ENCODE measurements at regions of chr19 and their contacts with region 1.

Region 1: DNA sequence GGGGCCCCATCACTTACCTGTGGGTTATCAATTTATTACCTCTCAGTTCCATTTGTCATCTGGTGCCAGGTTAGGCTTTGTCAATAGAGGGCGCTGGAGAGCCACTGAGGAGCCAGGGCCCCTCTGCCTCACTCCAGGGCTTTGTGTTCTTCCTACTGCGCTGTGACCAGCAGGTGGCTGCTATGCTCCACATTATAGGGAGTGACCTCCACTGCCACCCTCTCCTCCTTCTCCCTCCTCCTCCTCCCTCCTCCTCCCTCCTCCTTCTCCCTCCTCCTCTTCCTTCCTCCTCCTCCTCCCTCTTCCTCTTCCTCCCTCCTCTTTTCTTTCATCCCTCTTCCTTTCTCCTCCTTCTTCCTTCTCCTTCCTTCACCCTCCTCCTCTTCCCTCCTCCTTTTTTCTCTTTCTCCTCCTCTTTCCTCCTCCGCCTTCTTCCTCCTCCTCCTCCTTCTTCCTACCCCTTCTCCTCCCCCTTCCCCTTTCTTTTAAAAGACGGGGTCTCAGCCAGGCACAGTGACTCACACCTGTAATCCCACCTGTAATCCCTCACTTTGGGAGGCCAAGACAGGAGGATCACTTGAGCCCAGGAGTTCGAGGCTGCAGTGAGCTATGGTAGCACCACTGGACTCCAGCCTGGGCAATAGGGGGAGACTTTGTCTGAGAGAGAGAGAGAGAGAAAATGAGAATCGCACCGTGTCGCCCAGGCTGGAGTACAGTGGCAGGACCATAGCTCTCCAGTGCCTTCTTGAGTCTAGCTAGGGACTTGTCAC is 10.3 kb upstream of the ZBTB32 start:
- DNase-seq: peak; percentile 95
- ATAC-seq: peak; percentile 100
- H3K4me3 Mint-ChIP-seq: no peak overlapping the region
- H3K27ac Mint-ChIP-seq: peak overlapping the region; percentile 70
- H3K4me1 Mint-ChIP-seq: peaks cover 22% of the 10 kb centered on the region
- H3K27me3 Mint-ChIP-seq: no peaks in the 10 kb centered on the region

Region 2: DNA sequence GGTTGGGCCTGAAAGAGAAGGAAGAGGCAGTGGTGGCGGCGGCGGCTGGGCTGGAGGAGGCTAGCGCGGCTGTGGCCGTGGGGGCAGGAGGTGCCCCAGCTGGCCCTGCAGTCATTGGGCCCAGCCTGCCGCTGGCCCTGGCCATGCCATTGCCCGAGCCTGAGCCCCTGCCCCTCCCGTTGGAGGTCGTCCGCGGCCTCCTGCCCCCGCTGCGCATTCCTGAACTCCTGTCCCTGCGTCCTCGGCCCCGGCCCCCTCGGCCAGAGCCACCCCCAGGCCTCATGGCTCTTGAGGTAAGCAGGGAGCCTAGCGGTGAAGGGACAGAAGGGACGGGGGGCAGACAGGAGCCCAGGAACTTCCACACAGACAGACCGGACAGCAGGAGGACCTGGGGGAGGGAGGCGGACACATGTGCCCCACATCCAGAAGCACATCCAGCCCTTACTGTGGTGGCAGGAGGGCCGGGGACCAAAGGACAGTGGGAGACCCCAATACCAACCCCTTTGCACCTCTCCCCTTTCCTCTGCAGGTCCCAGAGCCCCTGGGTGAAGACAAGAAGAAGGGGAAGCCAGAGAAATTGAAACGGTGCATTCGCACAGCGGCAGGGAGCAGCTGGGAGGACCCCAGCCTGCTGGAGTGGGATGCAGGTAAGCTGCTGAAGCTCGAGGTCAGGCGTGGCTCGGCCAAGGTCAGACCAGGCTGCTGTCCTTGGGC is 60.1 kb before region 1 on chr19:
- CTCF ChIA-PET with region 1: no interaction called
- POLR2A ChIA-PET with region 1: no interaction called
- DNase-seq: no peak
- ATAC-seq: no peak
- H3K4me3 Mint-ChIP-seq: no peak overlapping the region
- H3K27ac Mint-ChIP-seq: no peak overlapping the region
- H3K4me1 Mint-ChIP-seq: peaks cover 16% of the 10 kb centered on the region
- H3K27me3 Mint-ChIP-seq: no peaks in the 10 kb centered on the region

Region 3: DNA sequence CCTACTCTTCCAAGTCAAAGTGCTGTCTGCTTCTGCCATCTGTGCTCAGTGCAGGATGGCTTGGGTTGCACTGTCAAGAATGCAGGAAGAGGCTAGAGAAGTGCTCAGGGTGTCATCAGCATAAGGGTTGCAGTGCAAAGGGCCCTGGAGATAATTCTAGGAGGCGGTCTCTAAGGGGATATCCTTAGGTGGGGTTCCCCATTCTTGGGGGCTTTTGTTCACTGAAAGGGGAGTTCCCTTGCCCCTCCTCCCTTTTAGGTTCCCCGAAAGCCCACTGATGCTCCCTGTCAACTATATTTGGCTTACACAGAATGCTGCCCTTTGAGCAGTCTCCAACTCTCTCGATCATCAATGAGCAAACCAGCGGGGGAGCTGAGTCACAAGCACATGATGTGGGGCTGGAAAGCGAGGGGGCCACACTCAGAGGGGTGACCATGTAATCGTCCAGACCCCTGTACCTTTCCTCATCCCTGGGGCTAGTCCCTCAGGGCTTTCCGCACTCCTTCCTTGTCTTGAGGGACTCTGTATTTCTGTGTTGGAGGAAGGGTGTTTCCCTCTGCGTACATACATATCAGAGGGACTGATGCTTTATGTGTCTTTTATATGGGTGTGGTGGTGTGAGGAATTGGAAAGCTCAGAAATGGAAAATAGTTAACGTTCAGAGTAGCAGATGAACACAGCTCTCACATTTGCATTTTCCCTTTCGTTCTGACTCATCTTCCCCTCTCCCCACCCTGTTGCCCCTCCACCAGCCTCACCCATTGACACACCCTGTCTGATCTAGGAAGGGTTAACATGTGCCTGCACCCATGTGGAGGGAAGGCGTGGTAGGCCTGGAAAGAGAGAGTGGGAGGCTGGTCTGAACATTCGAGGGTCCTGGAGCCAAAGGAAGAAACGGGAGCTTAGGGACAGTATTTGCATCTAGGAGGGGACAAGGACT is 17.0 kb after region 1 on chr19:
- CTCF ChIA-PET with region 1: interaction called, 266 read pairs
- POLR2A ChIA-PET with region 1: interaction called, 96 read pairs
- DNase-seq: peak; percentile 75
- ATAC-seq: peak; percentile 29
- H3K4me3 Mint-ChIP-seq: peak overlapping the region; percentile 34
- H3K27ac Mint-ChIP-seq: peak overlapping the region; percentile 95
- H3K4me1 Mint-ChIP-seq: peaks cover 67% of the 10 kb centered on the region
- H3K27me3 Mint-ChIP-seq: no peaks in the 10 kb centered on the region

Region 4: GRCh38 chr19:35716801-35717666 is 23.0 kb after region 1 on chr19:
- CTCF ChIA-PET with region 1: interaction called, 266 read pairs
- POLR2A ChIA-PET with region 1: interaction called, 96 read pairs
- DNase-seq: peak; percentile 97
- ATAC-seq: peak; percentile 77
- H3K4me3 Mint-ChIP-seq: peak overlapping the region; percentile 83
- H3K27ac Mint-ChIP-seq: peak overlapping the region; percentile 89
- H3K4me1 Mint-ChIP-seq: peaks cover 65% of the 10 kb centered on the region
- H3K27me3 Mint-ChIP-seq: no peaks in the 10 kb centered on the region

Region 5: GRCh38 chr19:35740423-35741202 is 46.6 kb after region 1 on chr19:
- CTCF ChIA-PET with region 1: interaction called, 18 read pairs
- POLR2A ChIA-PET with region 1: interaction called, 3 read pairs
- DNase-seq: peak; percentile 99
- ATAC-seq: peak; percentile 74
- H3K4me3 Mint-ChIP-seq: peak overlapping the region; percentile 90
- H3K27ac Mint-ChIP-seq: peak overlapping the region; percentile 92
- H3K4me1 Mint-ChIP-seq: peaks cover 50% of the 10 kb centered on the region
- H3K27me3 Mint-ChIP-seq: no peaks in the 10 kb centered on the region

Region 6: DNA sequence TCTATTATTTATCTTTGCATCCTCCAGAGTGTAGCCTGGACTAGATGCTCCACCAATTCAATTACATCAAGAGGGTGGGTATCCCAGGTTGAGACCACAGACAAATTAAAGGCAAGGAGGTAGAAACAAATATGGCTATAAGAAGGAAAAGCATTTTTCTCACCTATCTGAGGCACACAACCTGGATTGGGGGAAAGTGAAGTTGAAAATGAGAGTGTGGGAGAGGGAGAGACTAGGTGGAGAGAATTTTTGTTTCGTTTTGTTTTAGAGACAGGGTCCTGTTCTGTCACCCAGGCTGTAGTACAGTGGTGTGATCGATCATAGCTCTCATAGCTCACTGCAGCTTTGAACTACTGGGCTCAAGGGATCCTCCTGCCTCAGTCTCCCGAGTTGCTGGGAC is 124.4 kb after region 1 on chr19:
- CTCF ChIA-PET with region 1: interaction called, 13 read pairs
- POLR2A ChIA-PET with region 1: no interaction called
- DNase-seq: no peak
- ATAC-seq: no peak
- H3K4me3 Mint-ChIP-seq: no peak overlapping the region
- H3K27ac Mint-ChIP-seq: no peak overlapping the region
- H3K4me1 Mint-ChIP-seq: peaks cover 7% of the 10 kb centered on the region
- H3K27me3 Mint-ChIP-seq: peaks cover 4% of the 10 kb centered on the region

Measured in activated CD8-positive, alpha-beta T cell treated with anti-CD3 and anti-CD28 coated beads, Interleukin-2, amount 10 ng/mL, durations not matched to agents 7 days and 5 days (primary cell).